CD4-positive, alpha-beta memory T cell (primary cell): ENCODE measurements at regions of chr3 and their contacts with region 1.

Region 1: DNA sequence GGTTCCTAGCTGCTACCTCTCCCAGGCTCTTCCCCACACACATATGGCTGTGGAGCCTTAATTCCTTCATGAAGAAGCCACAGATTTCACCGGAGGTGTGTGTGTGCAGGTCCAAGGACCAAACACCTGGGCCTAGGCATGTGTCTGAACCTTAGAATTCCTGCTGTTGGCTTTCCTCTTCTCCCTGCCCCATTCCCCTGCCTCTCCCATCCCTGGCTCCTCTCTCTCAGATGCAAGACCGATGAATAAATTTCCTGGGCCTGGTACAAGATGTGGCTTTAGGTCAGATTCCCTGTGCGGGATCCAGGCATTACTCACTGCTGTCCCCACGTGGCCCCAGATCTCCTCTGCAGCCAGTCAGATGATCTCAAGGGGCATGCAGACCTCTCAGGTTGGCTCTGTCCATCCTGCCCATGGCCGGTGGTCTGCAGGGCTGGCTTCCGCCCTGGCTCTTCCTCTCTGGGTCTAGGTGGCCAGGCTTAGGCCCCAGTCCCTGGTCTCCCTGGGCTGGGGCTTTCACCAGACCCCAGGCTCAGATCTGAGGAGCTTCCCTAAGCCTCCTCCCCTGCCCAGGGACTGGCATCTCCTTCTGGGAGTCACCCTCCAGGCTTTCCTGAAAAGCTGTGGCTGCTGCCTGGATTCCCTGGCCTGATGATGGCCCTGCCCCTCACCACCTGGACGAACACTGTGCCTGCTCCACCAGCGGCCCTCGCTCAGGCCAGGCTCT is 20.5 kb downstream of the CCR9 start:
- DNase-seq: no peak
- H3K4me3 ChIP-seq: no peak overlapping the region
- H3K4me3 Mint-ChIP-seq: peak overlapping the region in 1 of 8 donors; percentile 62
- H3K27ac ChIP-seq: no peak overlapping the region
- H3K27ac Mint-ChIP-seq: peak overlapping the region in 3 of 7 donors; percentile 30 to 51 (median 35)
- H3K4me1 ChIP-seq: peaks cover 34% of the 10 kb centered on the region
- H3K4me1 Mint-ChIP-seq: peaks cover 22 to 55% (median 35%) of the 10 kb centered on the region in 4 donors
- H3K27me3 ChIP-seq: no peaks in the 10 kb centered on the region
- H3K27me3 Mint-ChIP-seq: no peaks in the 10 kb centered on the region

Region 2: GRCh38 chr3:45736707-45737106 is 170.1 kb before region 1 on chr3:
- CTCF ChIA-PET with region 1: no interaction called
- POLR2A ChIA-PET with region 1: no interaction called
- intact Hi-C with region 1: no loop called
- DNase-seq: no peak
- H3K4me3 ChIP-seq: no peak overlapping the region
- H3K4me3 Mint-ChIP-seq: no peak overlapping the region
- H3K27ac ChIP-seq: no peak overlapping the region
- H3K27ac Mint-ChIP-seq: peak overlapping the region in 3 of 7 donors; percentile 55 to 77 (median 58)
- H3K4me1 ChIP-seq: peaks cover 12% of the 10 kb centered on the region
- H3K4me1 Mint-ChIP-seq: peaks cover 15 to 34% (median 22%) of the 10 kb centered on the region in 4 donors
- H3K27me3 ChIP-seq: no peaks in the 10 kb centered on the region
- H3K27me3 Mint-ChIP-seq: no peaks in the 10 kb centered on the region

Region 3: DNA sequence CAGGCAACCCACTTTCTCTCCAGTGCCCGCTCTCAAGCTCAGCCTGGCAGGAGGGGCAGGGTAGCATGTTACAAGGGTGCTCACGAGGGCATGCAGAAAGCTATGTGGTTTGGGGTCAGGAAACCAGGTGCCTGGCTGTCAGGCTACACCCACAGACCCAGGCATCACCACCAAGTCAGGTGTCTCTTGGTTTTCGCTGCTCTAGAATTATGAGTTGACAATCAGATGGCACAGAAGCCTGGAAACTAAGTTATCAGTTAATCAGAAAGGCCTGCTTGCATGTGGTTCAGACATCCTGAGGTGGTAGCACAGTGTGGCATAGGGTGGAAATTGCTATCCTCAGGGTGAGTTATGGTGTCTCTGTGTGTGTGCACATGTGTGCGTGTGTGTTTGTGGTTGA is 36.7 kb before region 1 on chr3:
- CTCF ChIA-PET with region 1: interaction called, 3 read pairs
- POLR2A ChIA-PET with region 1: interaction called, 6 read pairs
- intact Hi-C with region 1: loop called (anchors 2 kb)
- DNase-seq: peak; percentile 86 to 93 (median 91)
- H3K4me3 ChIP-seq: no peak overlapping the region
- H3K4me3 Mint-ChIP-seq: peak overlapping the region; percentile 4 to 73 (median 56)
- H3K27ac ChIP-seq: no peak overlapping the region
- H3K27ac Mint-ChIP-seq: peak overlapping the region; percentile 14 to 86 (median 72)
- H3K4me1 ChIP-seq: peaks cover 44% of the 10 kb centered on the region
- H3K4me1 Mint-ChIP-seq: peaks cover 33 to 59% (median 42%) of the 10 kb centered on the region in 4 donors
- H3K27me3 ChIP-seq: no peaks in the 10 kb centered on the region
- H3K27me3 Mint-ChIP-seq: peaks cover 10 to 12% of the 10 kb centered on the region in 2 donors

Region 4: GRCh38 chr3:45894015-45894414 is 12.8 kb before region 1 on chr3:
- CTCF ChIA-PET with region 1: interaction called, 16 read pairs
- POLR2A ChIA-PET with region 1: interaction called, 5 read pairs
- intact Hi-C with region 1: no loop called
- DNase-seq: no peak
- H3K4me3 ChIP-seq: no peak overlapping the region
- H3K4me3 Mint-ChIP-seq: no peak overlapping the region
- H3K27ac ChIP-seq: no peak overlapping the region
- H3K27ac Mint-ChIP-seq: peak overlapping the region in 2 of 7 donors; percentile 19 to 52
- H3K4me1 ChIP-seq: no peaks in the 10 kb centered on the region
- H3K4me1 Mint-ChIP-seq: peaks cover 8 to 16% (median 13%) of the 10 kb centered on the region in 4 donors
- H3K27me3 ChIP-seq: no peaks in the 10 kb centered on the region
- H3K27me3 Mint-ChIP-seq: peaks cover 0 to 4% of the 10 kb centered on the region in 2 donors